ENCODE measurements at regions of chr5 and their contacts with region 1.

Region 1: GRCh38 chr5:159106569-159107282 is 7.0 kb upstream of the EBF1 start:
- DNase-seq: peak; percentile 27
- ATAC-seq: peak; percentile 92
- H3K4me3 ChIP-seq: peak overlapping the region in 1 of 2 experiments; percentile 28; a peak in 2 of 4 replicates
- H3K27ac ChIP-seq: no peak overlapping the region
- H3K4me1 ChIP-seq: peaks cover 11% of the 10 kb centered on the region; the same call in 1 of the 2 replicates
- H3K27me3 ChIP-seq: peaks cover 38% of the 10 kb centered on the region
- CTCF ChIP-seq: peak; percentile 92

Region 2: DNA sequence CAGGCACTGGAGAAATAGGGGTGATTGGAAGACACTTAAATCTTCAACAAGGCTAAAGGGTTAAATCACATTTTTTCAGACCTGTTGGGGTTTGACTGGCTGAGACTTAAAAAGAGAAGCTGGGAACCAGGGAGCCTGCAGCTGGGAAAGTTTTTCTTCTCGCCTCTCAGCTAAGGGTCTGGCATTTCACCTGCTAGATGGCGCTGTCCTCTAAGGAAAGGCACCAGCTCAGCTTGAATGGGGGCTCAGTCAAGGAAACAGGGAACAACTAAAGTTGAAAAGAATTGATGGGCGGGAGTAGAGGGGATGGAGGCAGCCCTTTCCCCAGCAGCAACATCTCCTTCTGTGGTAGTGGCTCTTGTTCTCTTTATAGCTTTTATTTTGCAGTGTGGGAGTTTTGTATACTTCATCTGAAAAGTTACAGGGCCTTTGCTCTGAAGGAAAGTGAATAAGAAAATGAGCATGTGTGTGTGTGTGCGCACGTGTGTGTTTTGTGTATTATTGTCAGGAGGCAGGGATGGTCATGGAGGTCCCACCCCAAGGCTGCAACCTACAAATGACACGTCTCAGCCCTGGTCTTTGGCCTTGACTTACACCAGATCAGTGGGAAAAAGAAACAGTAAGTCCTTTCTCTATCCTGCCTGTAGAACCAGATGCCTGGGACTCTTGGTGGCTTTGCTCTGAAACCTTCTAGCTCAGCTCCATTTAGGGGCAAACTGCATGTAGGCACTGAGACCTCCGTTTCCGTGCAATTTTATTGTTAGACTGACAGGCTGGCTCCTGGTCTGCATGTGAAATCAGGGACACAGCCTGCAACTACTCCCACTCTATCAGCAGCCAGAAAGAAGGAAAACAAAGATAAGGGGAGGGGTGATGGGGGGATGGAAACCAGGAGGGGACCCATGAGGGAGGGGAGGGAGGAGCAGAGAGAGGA is 931.5 kb before region 1 on chr5:
- CTCF ChIA-PET with region 1: interaction called, 4 read pairs
- POLR2A ChIA-PET with region 1: no interaction called
- in situ Hi-C with region 1: no loop called
- intact Hi-C with region 1: loop called (anchors 2 kb)
- DNase-seq: peak; percentile 20
- ATAC-seq: peak; percentile 90
- H3K4me3 ChIP-seq: no peak overlapping the region
- H3K27ac ChIP-seq: no peak overlapping the region
- H3K4me1 ChIP-seq: no peaks in the 10 kb centered on the region
- H3K27me3 ChIP-seq: no peaks in the 10 kb centered on the region; the same call in 1 of the 2 replicates
- CTCF ChIP-seq: peak; percentile 80